ENCODE measurements at regions of chr16 and their contacts with region 1.

Region 1: DNA sequence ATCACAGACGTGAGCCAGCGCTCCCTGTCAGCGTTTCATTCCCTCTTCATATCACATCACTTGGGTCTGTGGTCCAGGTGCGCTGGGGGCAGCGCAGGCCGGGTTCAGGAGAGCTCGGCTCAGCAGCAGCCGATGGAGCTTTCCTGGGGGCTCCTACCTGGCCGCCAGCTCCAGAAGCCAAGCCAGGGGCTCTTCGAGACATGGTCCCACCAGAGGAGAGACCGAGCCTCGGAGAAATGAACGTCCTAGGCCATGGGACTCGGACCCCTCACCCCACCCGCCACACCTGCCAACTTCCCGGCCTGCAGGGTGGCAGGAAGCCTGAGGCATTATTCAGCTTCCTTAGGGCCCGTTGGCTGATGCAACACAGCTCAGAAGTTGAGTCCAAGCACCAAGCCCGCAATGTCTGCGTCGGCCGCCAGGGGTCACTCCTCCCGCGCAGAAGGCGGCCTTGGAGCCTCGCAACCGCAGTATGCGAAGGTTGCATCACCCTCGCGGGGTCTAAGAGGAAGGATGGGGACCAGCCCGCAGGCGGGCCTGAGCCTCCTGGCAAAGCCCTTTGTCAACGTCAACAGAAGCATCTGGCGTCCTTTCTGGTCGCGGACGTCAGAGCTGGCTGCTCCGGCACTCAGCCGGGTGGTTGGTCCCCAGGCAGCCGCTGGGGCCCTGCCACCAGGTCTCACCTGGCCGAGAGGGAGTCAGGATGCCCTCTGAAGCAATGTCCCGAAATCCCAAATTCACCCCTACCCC is 13.2 kb upstream of the KLHDC4 start:
- DNase-seq: peak; percentile 98
- ATAC-seq: peak; percentile 70
- H3K4me3 Mint-ChIP-seq: peak overlapping the region; percentile 82
- H3K27ac Mint-ChIP-seq: peak overlapping the region; percentile 99
- H3K4me1 Mint-ChIP-seq: peaks cover 54% of the 10 kb centered on the region
- H3K27me3 Mint-ChIP-seq: no peaks in the 10 kb centered on the region

Region 2: GRCh38 chr16:87765776-87766484 is 13.1 kb before region 1 on chr16 and contains the start of gene KLHDC4:
- CTCF ChIA-PET with region 1: interaction called, 33 read pairs
- POLR2A ChIA-PET with region 1: interaction called, 13 read pairs
- intact Hi-C with region 1: no loop called
- DNase-seq: peak; percentile 94
- ATAC-seq: peak; percentile 88
- H3K4me3 Mint-ChIP-seq: peak within 1 kb of the TSS; percentile 100
- H3K27ac Mint-ChIP-seq: peak within 1 kb of the TSS; percentile 99
- H3K4me1 Mint-ChIP-seq: peaks cover 35% of the 10 kb centered on the region
- H3K27me3 Mint-ChIP-seq: no peaks in the 10 kb centered on the region
- total RNA-seq, gene KLHDC4: 67.0 to 77.3 TPM

Region 3: DNA sequence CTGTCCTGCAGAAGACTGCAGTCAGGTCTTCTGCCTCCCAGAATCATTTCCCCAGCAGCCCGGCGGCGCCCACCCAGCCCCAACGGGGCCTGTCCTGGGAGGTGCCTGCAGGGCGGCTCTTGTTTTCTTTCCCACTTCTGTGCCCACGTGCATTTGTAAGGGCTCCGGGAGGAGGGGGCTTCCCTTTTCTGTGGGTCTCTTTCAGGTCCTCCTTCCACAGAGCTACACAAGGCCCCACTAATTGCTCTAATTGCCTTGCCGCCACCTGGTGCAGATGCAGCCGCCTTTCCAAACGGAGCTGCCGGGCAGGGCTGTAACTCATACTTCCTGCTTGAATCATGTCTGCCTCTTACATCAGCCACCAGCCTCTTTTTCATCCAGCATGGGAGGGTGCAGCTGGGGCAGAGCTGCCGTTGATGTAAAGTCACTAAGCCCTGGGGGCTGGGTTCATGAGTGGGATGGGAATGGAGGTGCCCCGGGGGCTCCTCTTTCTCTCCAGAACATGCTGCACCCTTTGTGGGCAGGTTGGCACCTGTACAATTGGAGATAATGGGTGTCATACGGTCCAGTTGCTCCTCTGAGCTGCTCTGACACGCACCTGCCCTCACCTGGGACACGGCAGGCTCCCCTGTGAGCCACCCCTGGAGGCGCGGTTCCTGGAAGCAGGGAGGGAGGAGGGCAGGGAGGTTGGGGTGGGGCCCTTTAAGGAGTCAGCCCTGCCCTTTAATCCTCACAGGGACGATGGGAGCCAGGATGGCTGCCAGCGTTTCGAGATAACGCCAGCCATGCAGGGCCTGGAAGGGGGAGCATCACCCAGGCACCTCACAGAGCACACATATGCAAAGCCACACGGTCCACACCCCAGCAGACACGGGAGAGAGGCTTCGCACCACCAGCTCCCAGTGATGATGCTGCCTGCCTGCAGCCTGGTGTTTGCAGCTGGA is 27.9 kb after region 1 on chr16:
- CTCF ChIA-PET with region 1: interaction called, 16 read pairs
- POLR2A ChIA-PET with region 1: interaction called, 7 read pairs
- intact Hi-C with region 1: loop called (anchors 1 kb)
- DNase-seq: peak; percentile 85
- ATAC-seq: peak; percentile 88
- H3K4me3 Mint-ChIP-seq: peak overlapping the region; percentile 80
- H3K27ac Mint-ChIP-seq: peak overlapping the region; percentile 98
- H3K4me1 Mint-ChIP-seq: peaks cover 29% of the 10 kb centered on the region
- H3K27me3 Mint-ChIP-seq: no peaks in the 10 kb centered on the region

Region 4: DNA sequence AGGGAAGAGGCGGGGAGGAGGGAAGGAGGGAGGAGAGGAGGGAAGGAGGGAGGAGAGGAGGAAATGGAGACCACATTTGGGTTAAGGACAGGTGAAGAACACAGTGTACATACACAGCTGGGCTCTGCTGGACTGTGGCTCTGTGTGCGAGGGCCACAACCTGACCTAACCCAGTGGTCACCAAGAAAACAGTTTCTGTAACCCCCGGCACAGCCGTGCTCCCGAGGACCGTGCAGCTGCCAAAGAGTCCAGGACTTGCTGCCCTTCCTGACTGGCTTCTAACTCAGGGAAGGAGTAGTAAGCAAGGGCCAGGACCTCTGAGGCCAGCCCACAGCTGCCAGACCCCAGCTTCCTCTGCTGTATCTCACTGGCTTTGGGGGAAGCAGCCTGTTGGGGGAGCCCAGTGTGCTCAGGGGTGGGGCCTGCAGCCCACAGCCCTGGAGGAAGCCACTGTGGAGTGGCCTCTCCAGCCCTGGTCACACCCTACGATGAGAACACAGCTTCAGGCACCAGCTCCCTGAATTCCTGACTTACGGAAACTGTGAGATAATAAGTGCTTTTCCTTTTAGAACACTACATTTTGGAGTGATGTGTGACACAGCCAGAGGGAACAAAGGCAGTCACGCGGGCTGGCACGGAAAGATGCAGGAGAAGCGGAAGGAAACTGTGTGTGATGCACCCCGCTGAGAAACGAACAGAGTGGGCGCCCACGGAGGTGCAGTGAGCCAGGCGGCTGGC is 58.0 kb after region 1 on chr16:
- CTCF ChIA-PET with region 1: interaction called, 10 read pairs
- POLR2A ChIA-PET with region 1: interaction called, 5 read pairs
- intact Hi-C with region 1: no loop called
- DNase-seq: no peak
- ATAC-seq: no peak
- H3K4me3 Mint-ChIP-seq: no peak overlapping the region
- H3K27ac Mint-ChIP-seq: no peak overlapping the region
- H3K4me1 Mint-ChIP-seq: no peaks in the 10 kb centered on the region
- H3K27me3 Mint-ChIP-seq: no peaks in the 10 kb centered on the region

Region 5: DNA sequence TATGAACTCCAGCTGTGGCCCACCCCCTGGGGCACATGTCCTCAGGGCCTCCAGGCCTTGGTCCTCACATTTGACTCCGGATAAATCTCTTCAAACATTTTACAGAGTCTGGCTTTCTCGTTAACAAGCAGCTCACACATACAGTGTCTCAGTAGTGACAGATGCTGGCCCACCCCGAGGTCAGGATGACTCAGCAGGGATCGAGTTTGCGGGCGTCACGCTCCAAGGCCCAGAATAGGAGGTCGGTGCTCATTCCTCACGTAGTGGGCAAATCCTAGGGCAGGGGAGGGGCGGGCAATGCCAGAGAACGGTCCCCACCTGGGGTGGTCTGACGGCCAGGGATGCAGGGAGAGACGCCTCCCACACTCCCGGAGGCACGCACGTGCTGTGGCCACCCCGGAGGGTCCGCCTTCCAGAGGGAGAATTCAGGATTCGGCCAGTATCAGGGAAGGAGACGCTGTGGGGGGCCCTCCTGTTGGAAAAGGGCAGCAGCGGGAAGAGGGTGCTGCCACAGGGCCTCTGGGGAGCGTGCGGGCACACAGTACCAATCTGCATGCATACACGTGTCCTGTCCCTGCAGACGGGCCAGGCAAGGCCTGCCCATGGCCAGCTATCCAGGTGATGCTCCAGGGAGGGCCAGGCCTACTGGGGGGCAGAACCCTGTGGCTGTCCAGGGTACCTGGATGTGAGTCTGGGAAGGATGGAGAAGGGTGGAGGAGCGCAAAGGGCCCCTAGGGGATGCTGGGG is 81.7 kb after region 1 on chr16:
- CTCF ChIA-PET with region 1: interaction called, 15 read pairs
- POLR2A ChIA-PET with region 1: interaction called, 7 read pairs
- intact Hi-C with region 1: no loop called
- DNase-seq: no peak
- ATAC-seq: peak; percentile 11
- H3K4me3 Mint-ChIP-seq: peak overlapping the region; percentile 45
- H3K27ac Mint-ChIP-seq: peak overlapping the region; percentile 82
- H3K4me1 Mint-ChIP-seq: peaks cover 81% of the 10 kb centered on the region
- H3K27me3 Mint-ChIP-seq: no peaks in the 10 kb centered on the region

Region 6: GRCh38 chr16:87895641-87896141 is 116.7 kb after region 1 on chr16:
- CTCF ChIA-PET with region 1: interaction called, 26 read pairs
- POLR2A ChIA-PET with region 1: interaction called, 7 read pairs
- intact Hi-C with region 1: loop called (anchors 1 kb)
- DNase-seq: peak; percentile 95
- ATAC-seq: peak; percentile 91
- H3K4me3 Mint-ChIP-seq: peak overlapping the region; percentile 44
- H3K27ac Mint-ChIP-seq: peak overlapping the region; percentile 99
- H3K4me1 Mint-ChIP-seq: peaks cover 56% of the 10 kb centered on the region
- H3K27me3 Mint-ChIP-seq: no peaks in the 10 kb centered on the region

Region 7: DNA sequence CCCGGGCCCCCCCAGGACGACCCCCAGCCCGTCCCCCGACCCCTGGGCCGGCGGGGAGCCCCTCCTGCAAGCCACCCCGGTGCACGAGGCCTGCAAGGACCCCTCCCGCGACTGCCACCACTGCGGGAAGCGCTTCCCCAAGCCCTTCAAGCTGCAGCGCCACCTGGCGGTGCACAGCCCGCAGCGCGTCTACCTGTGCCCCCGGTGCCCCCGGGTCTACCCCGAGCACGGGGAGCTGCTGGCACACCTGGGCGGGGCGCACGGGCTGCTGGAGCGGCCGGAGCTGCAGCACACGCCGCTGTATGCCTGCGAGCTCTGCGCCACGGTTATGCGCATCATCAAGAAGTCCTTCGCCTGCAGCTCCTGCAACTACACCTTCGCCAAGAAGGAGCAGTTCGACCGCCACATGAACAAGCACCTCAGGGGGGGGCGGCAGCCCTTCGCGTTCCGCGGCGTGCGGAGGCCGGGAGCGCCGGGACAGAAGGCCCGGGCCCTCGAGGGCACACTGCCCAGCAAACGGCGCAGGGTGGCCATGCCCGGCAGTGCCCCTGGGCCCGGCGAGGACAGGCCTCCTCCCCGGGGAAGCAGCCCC is 658.5 kb after region 1 on chr16:
- CTCF ChIA-PET with region 1: interaction called, 5 read pairs
- POLR2A ChIA-PET with region 1: no interaction called
- intact Hi-C with region 1: loop called (anchors 2 to 10 kb)
- DNase-seq: peak; percentile 83
- ATAC-seq: peak; percentile 81
- H3K4me3 Mint-ChIP-seq: no peak overlapping the region
- H3K27ac Mint-ChIP-seq: no peak overlapping the region
- H3K4me1 Mint-ChIP-seq: no peaks in the 10 kb centered on the region
- H3K27me3 Mint-ChIP-seq: no peaks in the 10 kb centered on the region